ENCODE measurements at regions of chr13 and their contacts with region 1.

Region 1: DNA sequence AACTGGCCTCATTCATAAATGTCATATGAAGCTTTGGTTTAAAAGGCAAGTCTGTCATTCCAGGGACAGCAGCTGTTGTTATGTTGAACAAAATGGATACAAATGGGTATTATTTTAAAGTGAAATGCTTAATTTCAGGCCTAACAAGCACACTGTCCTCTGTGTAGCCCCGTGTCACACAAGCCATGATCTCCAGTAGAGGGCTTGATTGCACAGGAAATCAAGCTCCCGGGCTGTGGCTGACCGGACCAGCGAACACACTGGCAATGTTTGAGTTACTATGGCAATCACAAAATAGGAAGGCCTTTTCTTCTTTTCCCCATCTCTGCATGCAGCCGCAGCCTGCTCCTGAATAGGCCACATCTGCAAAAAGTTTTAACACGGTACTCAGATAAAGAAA is 64.0 kb upstream of the GSX1 start:
- DNase-seq: no peak
- H3K4me3 ChIP-seq: no peak overlapping the region
- H3K4me3 Mint-ChIP-seq: no peak overlapping the region
- H3K27ac ChIP-seq: no peak overlapping the region
- H3K27ac Mint-ChIP-seq: no peak overlapping the region
- H3K4me1 ChIP-seq: peaks cover 21% of the 10 kb centered on the region
- H3K4me1 Mint-ChIP-seq: peaks cover 13 to 33% (median 20%) of the 10 kb centered on the region in 4 donors
- H3K27me3 ChIP-seq: no peaks in the 10 kb centered on the region
- H3K27me3 Mint-ChIP-seq: peaks cover 2 to 6% of the 10 kb centered on the region in 2 donors

Region 2: GRCh38 chr13:26236296-26236695 is 1492.0 kb before region 1 on chr13:
- CTCF ChIA-PET with region 1: no interaction called
- POLR2A ChIA-PET with region 1: no interaction called
- intact Hi-C with region 1: no loop called
- DNase-seq: no peak
- H3K4me3 ChIP-seq: no peak overlapping the region
- H3K4me3 Mint-ChIP-seq: no peak overlapping the region
- H3K27ac ChIP-seq: no peak overlapping the region
- H3K27ac Mint-ChIP-seq: no peak overlapping the region
- H3K4me1 ChIP-seq: no peaks in the 10 kb centered on the region
- H3K4me1 Mint-ChIP-seq: no peaks in the 10 kb centered on the region
- H3K27me3 ChIP-seq: no peaks in the 10 kb centered on the region
- H3K27me3 Mint-ChIP-seq: peaks cover 6 to 23% of the 10 kb centered on the region in 2 donors

Region 3: GRCh38 chr13:27704681-27705080 is 23.6 kb before region 1 on chr13:
- CTCF ChIA-PET with region 1: no interaction called
- POLR2A ChIA-PET with region 1: no interaction called
- intact Hi-C with region 1: loop called (anchors 1 kb)
- DNase-seq: peak in 3 of 5 donors; percentile 8 to 19 (median 11)
- H3K4me3 ChIP-seq: no peak overlapping the region
- H3K4me3 Mint-ChIP-seq: peak overlapping the region in 6 of 8 donors; percentile 1 to 75 (median 16)
- H3K27ac ChIP-seq: no peak overlapping the region
- H3K27ac Mint-ChIP-seq: no peak overlapping the region
- H3K4me1 ChIP-seq: no peaks in the 10 kb centered on the region
- H3K4me1 Mint-ChIP-seq: peaks cover 2 to 6% (median 5%) of the 10 kb centered on the region in 4 donors
- H3K27me3 ChIP-seq: no peaks in the 10 kb centered on the region
- H3K27me3 Mint-ChIP-seq: peaks cover 8 to 34% of the 10 kb centered on the region in 2 donors

Measured in CD4-positive, alpha-beta memory T cell (primary cell).